Naive thymus-derived CD4-positive, alpha-beta T cell (primary cell): ENCODE measurements at regions of chr6 and their contacts with region 1.

Region 1: GRCh38 chr6:143842902-143843676 is at the start of gene LTV1:
- DNase-seq: peak; percentile 82 to 90 (median 88)
- ATAC-seq: peak; percentile 98
- H3K4me3 ChIP-seq: peak within 1 kb of the TSS; percentile 99
- H3K4me3 Mint-ChIP-seq: peak within 1 kb of the TSS; percentile 93 to 99 (median 96)
- H3K27ac ChIP-seq: peak within 1 kb of the TSS; percentile 92
- H3K27ac Mint-ChIP-seq: peak within 1 kb of the TSS; percentile 91 to 99 (median 97)
- H3K4me1 ChIP-seq: peaks cover 6 to 11% of the 10 kb centered on the region in 2 donors
- H3K4me1 Mint-ChIP-seq: peaks cover 19 to 42% (median 32%) of the 10 kb centered on the region in 7 donors
- H3K27me3 ChIP-seq: no peaks in the 10 kb centered on the region
- H3K27me3 Mint-ChIP-seq: no peaks in the 10 kb centered on the region
- total RNA-seq, gene LTV1: 16.5 to 29.6 (median 22.6) TPM

Region 2: GRCh38 chr6:142146828-142147662 is 1696.0 kb before region 1 on chr6 and contains the starts of genes NMBR and VTA1:
- CTCF ChIA-PET with region 1: no interaction called
- POLR2A ChIA-PET with region 1: interaction called, 3 read pairs
- intact Hi-C with region 1: loop called (anchors 1 kb)
- DNase-seq: peak; percentile 81 to 98 (median 97)
- ATAC-seq: peak; percentile 99
- H3K4me3 ChIP-seq: peak within 1 kb of the TSS; percentile 95
- H3K4me3 Mint-ChIP-seq: peak within 1 kb of the TSS; percentile 88 to 98 (median 95)
- H3K27ac ChIP-seq: peak within 1 kb of the TSS; percentile 75
- H3K27ac Mint-ChIP-seq: peak within 1 kb of the TSS; percentile 80 to 98 (median 94)
- H3K4me1 ChIP-seq: peaks cover 22 to 25% of the 10 kb centered on the region in 2 donors
- H3K4me1 Mint-ChIP-seq: peaks cover 36 to 73% (median 65%) of the 10 kb centered on the region in 7 donors
- H3K27me3 ChIP-seq: no peaks in the 10 kb centered on the region
- H3K27me3 Mint-ChIP-seq: peaks cover 0 to 2% (median 0%) of the 10 kb centered on the region in 5 donors
- total RNA-seq, gene NMBR: not detected
- total RNA-seq, gene VTA1: 13.6 to 41.3 (median 32.6) TPM

Region 3: GRCh38 chr6:143176090-143177021 is 666.7 kb before region 1 on chr6:
- CTCF ChIA-PET with region 1: no interaction called
- POLR2A ChIA-PET with region 1: no interaction called
- intact Hi-C with region 1: no loop called
- DNase-seq: no peak
- ATAC-seq: no peak
- H3K4me3 ChIP-seq: no peak overlapping the region
- H3K4me3 Mint-ChIP-seq: peak overlapping the region in 1 of 10 donors; percentile 45
- H3K27ac ChIP-seq: no peak overlapping the region
- H3K27ac Mint-ChIP-seq: no peak overlapping the region
- H3K4me1 ChIP-seq: no peaks in the 10 kb centered on the region
- H3K4me1 Mint-ChIP-seq: no peaks in the 10 kb centered on the region
- H3K27me3 ChIP-seq: no peaks in the 10 kb centered on the region
- H3K27me3 Mint-ChIP-seq: no peaks in the 10 kb centered on the region

Region 4: DNA sequence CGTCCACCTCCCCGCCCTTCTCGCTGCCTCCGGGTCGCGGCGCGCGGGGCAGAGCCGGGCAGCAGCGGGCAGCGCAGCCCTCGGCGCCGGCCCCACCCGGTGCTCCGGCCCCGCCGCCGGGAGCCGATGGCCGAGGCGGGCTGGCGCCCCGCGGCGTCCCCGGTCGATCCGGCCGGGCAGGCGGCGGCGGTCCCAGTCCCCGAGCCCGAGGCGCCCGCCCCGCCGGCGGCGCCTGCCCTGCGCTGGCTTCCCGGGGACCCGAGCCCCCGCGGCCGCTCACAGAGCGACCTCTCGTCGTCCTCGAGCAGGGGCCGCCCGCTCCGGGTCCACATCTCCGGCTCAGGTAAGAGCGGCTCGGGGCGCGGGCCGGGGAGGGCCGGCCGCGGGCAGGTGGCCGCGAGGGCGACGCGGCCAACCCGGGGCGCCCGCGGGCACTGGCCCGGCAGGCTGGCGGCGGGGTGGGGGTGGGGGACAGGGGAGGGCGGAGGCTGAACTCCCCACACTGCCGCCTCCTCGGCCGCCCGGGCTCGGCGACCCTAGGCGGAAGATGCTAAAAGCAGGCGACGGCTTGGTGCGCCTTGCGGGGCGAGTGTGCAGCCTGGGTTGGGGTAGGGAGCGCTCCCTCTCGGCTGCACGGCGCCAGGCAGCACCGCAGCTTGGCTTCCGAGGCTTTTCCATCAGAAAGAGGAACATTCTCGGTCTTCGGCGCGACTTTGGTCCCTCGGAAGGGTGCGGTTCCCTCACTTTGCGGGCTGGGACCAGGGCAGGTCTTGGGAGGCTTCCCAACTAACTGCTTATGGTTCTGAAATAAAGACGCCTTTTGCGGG is 306.0 kb before region 1 on chr6:
- CTCF ChIA-PET with region 1: no interaction called
- POLR2A ChIA-PET with region 1: no interaction called
- intact Hi-C with region 1: loop called in 1 of 2 experiments (anchors 2 kb)
- DNase-seq: peak; percentile 37 to 69 (median 57)
- ATAC-seq: peak; percentile 83
- H3K4me3 ChIP-seq: peak overlapping the region; percentile 74
- H3K4me3 Mint-ChIP-seq: peak overlapping the region; percentile 81 to 92 (median 84)
- H3K27ac ChIP-seq: peak overlapping the region; percentile 60
- H3K27ac Mint-ChIP-seq: peak overlapping the region in 7 of 9 donors; percentile 59 to 89 (median 76)
- H3K4me1 ChIP-seq: peaks cover 27 to 28% of the 10 kb centered on the region in 2 donors
- H3K4me1 Mint-ChIP-seq: peaks cover 17 to 47% (median 37%) of the 10 kb centered on the region in 7 donors
- H3K27me3 ChIP-seq: no peaks in the 10 kb centered on the region
- H3K27me3 Mint-ChIP-seq: no peaks in the 10 kb centered on the region

Region 5: DNA sequence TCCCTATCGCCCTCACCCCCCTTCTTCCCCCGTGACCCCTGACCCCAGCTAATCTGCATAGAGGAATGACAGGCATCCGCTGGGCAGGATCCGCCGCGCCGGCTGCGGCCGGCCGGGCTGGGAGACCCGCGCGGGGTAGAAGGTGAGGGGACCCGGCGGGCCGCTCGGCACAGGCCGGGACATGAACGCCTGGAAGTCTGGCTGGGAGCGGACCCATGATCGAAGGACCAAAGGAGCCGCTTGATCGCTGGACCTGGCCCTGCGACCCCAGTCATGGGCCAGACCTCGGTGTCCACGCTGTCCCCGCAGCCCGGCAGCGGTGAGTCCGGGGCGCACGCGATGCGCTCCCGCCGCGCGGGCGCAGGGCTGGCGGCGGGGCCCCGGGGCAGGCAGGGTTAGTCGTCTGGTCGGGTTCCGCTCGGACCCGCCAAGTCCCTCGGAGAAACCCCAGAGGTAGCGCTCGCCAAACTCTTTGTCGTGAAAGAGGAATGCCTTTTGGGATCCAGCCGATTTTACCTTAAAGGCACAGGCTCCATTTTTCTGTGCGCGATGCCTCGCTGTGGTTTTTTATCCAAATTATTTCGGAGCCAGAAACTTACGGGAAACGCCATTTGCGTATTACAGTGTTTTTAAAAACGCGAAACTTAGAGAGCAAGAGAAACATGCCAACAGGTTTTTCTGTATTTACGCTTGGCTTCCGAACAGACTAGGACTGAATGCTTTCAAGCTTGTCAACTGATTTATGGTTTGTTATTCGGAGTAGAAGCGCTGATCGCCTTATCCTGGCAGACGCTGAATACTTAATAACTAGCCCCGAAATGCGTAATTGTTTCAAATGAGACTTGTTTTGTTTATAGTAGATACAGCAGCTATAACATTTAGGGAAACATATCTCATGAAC is 164.9 kb before region 1 on chr6 and contains the start of gene PHACTR2:
- CTCF ChIA-PET with region 1: no interaction called
- POLR2A ChIA-PET with region 1: no interaction called
- intact Hi-C with region 1: loop called (anchors 1 kb)
- DNase-seq: peak; percentile 22 to 64 (median 51)
- ATAC-seq: peak; percentile 89
- H3K4me3 ChIP-seq: peak within 1 kb of the TSS; percentile 62
- H3K4me3 Mint-ChIP-seq: peak within 1 kb of the TSS; percentile 81 to 93 (median 86)
- H3K27ac ChIP-seq: peak within 1 kb of the TSS; percentile 58
- H3K27ac Mint-ChIP-seq: peak within 1 kb of the TSS; percentile 13 to 78 (median 55)
- H3K4me1 ChIP-seq: peaks cover 0 to 8% of the 10 kb centered on the region in 2 donors
- H3K4me1 Mint-ChIP-seq: peaks cover 8 to 34% (median 14%) of the 10 kb centered on the region in 7 donors
- H3K27me3 ChIP-seq: no peaks in the 10 kb centered on the region
- H3K27me3 Mint-ChIP-seq: peaks cover 4 to 46% (median 14%) of the 10 kb centered on the region in 5 donors
- total RNA-seq, gene PHACTR2: 15.0 to 42.2 (median 23.2) TPM

Region 6: GRCh38 chr6:143700684-143701348 is 142.3 kb before region 1 on chr6:
- CTCF ChIA-PET with region 1: no interaction called
- POLR2A ChIA-PET with region 1: no interaction called
- intact Hi-C with region 1: no loop called
- DNase-seq: no peak
- ATAC-seq: no peak
- H3K4me3 ChIP-seq: no peak overlapping the region
- H3K4me3 Mint-ChIP-seq: no peak overlapping the region
- H3K27ac ChIP-seq: no peak overlapping the region
- H3K27ac Mint-ChIP-seq: no peak overlapping the region
- H3K4me1 ChIP-seq: no peaks in the 10 kb centered on the region
- H3K4me1 Mint-ChIP-seq: peaks cover 5 to 20% (median 15%) of the 10 kb centered on the region in 7 donors
- H3K27me3 ChIP-seq: no peaks in the 10 kb centered on the region
- H3K27me3 Mint-ChIP-seq: no peaks in the 10 kb centered on the region

Region 7: GRCh38 chr6:143878316-143878924 is 35.3 kb after region 1 on chr6:
- CTCF ChIA-PET with region 1: no interaction called
- POLR2A ChIA-PET with region 1: no interaction called
- intact Hi-C with region 1: no loop called
- DNase-seq: no peak
- ATAC-seq: no peak
- H3K4me3 ChIP-seq: no peak overlapping the region
- H3K4me3 Mint-ChIP-seq: peak overlapping the region in 1 of 10 donors; percentile 42
- H3K27ac ChIP-seq: no peak overlapping the region
- H3K27ac Mint-ChIP-seq: no peak overlapping the region
- H3K4me1 ChIP-seq: no peaks in the 10 kb centered on the region
- H3K4me1 Mint-ChIP-seq: peaks cover 0 to under 1% (median 0%) of the 10 kb centered on the region in 7 donors
- H3K27me3 ChIP-seq: no peaks in the 10 kb centered on the region
- H3K27me3 Mint-ChIP-seq: no peaks in the 10 kb centered on the region

Region 8: GRCh38 chr6:144055121-144055931 is 212.2 kb after region 1 on chr6:
- CTCF ChIA-PET with region 1: no interaction called
- POLR2A ChIA-PET with region 1: no interaction called
- intact Hi-C with region 1: loop called in 1 of 2 experiments (anchors 2 kb)
- DNase-seq: peak in 7 of 9 donors; percentile 49 to 76 (median 66)
- ATAC-seq: peak; percentile 96
- H3K4me3 ChIP-seq: peak overlapping the region; percentile 52
- H3K4me3 Mint-ChIP-seq: peak overlapping the region; percentile 74 to 93 (median 87)
- H3K27ac ChIP-seq: peak overlapping the region; percentile 66
- H3K27ac Mint-ChIP-seq: peak overlapping the region; percentile 78 to 99 (median 93)
- H3K4me1 ChIP-seq: peaks cover 12 to 23% of the 10 kb centered on the region in 2 donors
- H3K4me1 Mint-ChIP-seq: peaks cover 24 to 42% (median 31%) of the 10 kb centered on the region in 7 donors
- H3K27me3 ChIP-seq: no peaks in the 10 kb centered on the region
- H3K27me3 Mint-ChIP-seq: no peaks in the 10 kb centered on the region

Region 9: DNA sequence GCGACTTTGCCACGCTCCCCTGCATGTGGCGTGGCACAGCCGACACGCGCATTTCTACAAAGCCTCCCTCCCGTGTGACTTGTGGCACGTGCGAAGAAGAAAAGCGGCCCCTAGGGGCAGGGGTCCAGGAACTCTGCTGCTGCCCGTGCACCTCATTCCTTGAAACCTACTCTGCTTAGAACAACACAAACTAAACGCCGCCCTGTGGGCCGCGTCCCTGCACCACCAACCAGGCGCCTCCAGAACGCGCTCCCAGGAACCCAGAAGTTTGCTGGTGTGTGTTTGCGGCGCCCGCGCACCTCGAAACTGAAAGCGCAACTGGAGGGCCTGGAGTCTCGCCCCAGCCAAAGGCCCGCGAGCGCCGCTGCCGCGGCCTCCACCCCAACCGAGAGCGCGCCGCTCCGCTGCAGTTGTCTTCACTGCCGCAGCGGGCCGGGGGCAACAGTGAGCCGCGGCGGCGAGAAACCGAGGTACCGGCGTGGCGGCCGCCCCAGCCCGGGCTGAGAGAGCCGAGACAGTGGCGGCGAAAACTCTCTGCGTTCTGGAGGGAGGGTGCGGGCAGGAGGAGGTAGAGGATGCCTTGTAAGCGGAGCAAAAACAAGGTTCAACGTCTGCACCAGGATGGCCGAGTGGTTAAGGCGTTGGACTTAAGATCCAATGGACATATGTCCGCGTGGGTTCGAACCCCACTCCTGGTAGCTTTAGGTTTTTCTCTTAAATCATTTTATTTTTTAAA is 373.0 kb after region 1 on chr6:
- CTCF ChIA-PET with region 1: no interaction called
- POLR2A ChIA-PET with region 1: no interaction called
- intact Hi-C with region 1: loop called (anchors 1 kb)
- DNase-seq: peak; percentile 84 to 96 (median 94)
- ATAC-seq: peak; percentile 91
- H3K4me3 ChIP-seq: peak overlapping the region; percentile 73
- H3K4me3 Mint-ChIP-seq: peak overlapping the region; percentile 84 to 99 (median 97)
- H3K27ac ChIP-seq: peak overlapping the region; percentile 86
- H3K27ac Mint-ChIP-seq: peak overlapping the region; percentile 91 to 100 (median 100)
- H3K4me1 ChIP-seq: peaks cover 15 to 18% of the 10 kb centered on the region in 2 donors
- H3K4me1 Mint-ChIP-seq: peaks cover 12 to 48% (median 40%) of the 10 kb centered on the region in 7 donors
- H3K27me3 ChIP-seq: no peaks in the 10 kb centered on the region
- H3K27me3 Mint-ChIP-seq: peaks cover 0 to 12% (median 0%) of the 10 kb centered on the region in 5 donors